Panc1 (cell line): ENCODE measurements at regions of chr7 and their contacts with region 1.

Region 1: DNA sequence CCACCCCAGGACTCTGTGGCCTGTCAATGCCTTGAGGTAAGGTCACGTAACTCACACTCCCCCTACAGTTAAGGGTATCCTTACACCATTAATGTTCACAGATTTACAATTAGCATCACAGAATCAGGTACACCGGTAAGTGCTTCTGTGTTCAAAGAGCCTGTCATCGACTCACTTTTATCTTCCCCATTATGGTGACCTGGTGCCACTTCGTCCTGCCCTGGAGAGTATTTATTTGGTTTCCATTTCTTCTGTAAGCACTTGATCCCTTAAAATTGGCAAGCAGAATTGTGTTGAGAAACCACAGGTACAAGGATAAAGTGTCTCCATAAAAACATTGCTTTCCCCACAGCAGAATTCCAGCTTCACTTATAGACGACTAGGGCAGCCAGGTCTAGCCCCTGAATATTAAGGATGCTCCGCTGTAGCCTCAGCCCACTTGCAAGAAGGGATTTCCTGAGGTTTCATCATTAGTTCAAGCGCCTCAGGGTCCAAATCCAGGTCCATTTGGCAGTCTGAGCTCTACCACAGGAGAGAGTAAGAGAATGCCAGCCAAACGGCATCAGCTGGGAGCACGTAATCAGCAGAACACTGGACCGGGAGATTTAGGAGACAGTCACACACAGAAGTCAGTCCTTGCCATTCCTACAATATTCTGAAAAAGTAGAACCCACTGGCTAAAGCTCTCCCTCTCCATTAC is 10.1 kb downstream of the ATXN7L1 start:
- DNase-seq: no peak
- ATAC-seq: no peak
- H3K4me3 ChIP-seq: no peak overlapping the region
- H3K27ac ChIP-seq: no peak overlapping the region; the same call in 1 of the 2 replicates
- H3K4me1 ChIP-seq: no peaks in the 10 kb centered on the region
- H3K27me3 ChIP-seq: no peaks in the 10 kb centered on the region
- CTCF ChIP-seq: no peak

Region 2: DNA sequence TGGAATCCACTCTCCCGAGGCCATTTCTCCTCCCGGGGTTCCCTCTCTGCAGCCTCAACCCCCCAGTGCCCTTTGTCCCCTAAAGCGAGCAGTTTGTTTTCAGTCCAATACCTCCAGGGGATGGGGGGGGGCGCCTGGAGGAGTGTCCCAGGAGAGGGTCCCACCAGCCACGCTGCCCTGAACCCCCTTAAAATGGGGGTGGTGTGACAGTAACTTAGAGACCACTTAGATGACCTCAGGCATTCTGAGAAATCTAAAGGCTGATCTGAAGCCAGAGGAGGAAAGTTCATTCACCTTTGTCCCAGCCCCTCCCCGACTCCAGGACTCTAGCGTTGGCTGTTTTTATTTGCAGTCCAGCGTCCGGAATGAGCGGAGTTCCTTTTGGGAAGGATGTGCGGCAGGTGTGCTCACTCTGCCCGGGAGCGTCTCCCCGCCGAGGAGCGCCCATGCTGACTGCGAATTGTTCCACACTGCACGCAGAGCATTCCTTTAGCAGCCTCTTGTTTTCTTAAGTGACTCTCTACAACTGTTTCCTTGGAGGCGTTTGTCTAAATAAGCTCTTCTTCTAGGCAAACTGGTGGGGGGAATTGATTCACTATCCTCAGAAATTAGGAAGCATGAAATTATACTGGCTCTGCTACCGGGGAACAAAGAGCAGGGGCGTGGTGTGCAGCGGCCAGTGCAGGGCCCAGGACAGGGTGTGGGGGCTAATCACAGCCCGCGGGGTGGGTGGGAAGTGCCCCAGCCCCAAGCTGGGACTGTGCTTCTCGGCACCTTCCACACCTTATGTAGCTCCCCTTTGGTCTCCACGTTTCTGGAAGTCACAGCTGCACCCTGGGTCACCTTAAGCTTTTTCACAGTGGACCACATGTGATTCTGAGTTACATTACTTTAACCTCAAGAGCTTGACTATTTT is 199.6 kb after region 1 on chr7:
- CTCF ChIA-PET with region 1: no interaction called
- POLR2A ChIA-PET with region 1: interaction called, 15 read pairs
- in situ Hi-C with region 1: no loop called
- intact Hi-C with region 1: no loop called
- DNase-seq: no peak
- ATAC-seq: peak; percentile 42
- H3K4me3 ChIP-seq: peak overlapping the region; percentile 12 to 41
- H3K27ac ChIP-seq: peak overlapping the region; percentile 90
- H3K4me1 ChIP-seq: peaks cover 48% of the 10 kb centered on the region
- H3K27me3 ChIP-seq: no peaks in the 10 kb centered on the region
- CTCF ChIP-seq: no peak

Region 3: DNA sequence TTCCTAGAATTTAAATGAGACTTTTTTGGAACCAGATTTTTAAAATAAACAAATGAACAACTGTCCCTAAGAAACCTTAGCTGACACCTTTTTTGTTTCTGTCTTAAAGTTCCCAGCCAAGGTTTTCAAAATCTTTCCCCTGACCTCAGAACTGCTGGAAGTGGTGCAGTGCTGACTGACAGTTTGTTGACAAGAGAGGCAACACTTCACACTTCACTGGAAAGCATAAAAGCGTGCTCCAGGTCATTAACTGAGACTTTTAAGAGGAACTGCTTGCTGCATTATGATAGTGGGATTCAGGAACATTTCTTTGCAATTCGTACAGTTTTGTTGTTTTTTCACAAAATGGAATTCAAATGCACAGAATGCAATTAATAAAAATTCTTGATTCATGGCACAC is 209.7 kb after region 1 on chr7:
- CTCF ChIA-PET with region 1: no interaction called
- POLR2A ChIA-PET with region 1: no interaction called
- in situ Hi-C with region 1: no loop called
- intact Hi-C with region 1: no loop called
- DNase-seq: no peak
- ATAC-seq: no peak
- H3K4me3 ChIP-seq: no peak overlapping the region
- H3K27ac ChIP-seq: no peak overlapping the region
- H3K4me1 ChIP-seq: peaks cover 13% of the 10 kb centered on the region
- H3K27me3 ChIP-seq: no peaks in the 10 kb centered on the region
- CTCF ChIP-seq: no peak